Activated T-helper 2 cell treated with anti-CD3 and anti-CD28 coated beads, Interferon-gamma antibody, Interleukin-2, Interleukin-4, amounts not matched to agents 10 μg/mL and 5 μg/mL and 100 μg/mL, durations not matched to agents 14 hours and 24 hours and 36 hours (primary cell): ENCODE measurements at regions of chr11 and their contacts with region 1.

Region 1: DNA sequence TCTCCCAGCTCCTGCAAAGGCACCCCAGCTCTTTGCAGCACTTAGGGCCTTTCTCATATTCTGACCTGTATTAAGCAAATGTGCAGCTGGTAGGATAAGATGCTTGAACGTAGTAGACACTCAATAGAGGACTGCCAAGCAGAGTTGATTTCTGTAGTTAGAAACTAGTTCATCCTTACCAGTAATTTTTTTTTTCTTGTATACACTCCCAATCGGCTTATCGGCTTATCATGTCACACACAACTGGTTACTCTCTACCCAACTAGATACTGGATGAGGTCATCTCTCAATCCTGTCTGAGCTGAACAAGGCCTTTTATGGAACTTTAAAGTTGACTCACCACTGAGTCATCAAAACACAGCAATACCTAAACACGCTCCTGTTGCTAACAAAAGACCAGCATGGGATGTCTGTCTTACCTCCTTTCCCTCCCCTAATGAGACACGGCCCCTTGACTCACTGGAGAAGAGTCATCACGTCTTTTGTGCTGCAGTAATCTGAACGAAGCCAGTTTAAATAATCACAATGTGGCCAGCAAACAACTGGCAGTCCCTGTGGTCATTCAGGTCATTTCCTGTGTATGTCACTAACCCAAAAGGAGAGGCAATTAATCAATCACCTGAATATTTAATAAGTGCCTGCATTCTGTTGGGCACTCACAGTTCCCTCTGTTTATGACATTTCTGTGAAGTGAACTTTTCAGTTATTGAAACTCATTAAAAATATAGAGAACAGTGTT is 7.5 kb upstream of the WEE1 start:
- DNase-seq: peak; percentile 61
- H3K4me3 Mint-ChIP-seq: peak overlapping the region; percentile 37
- H3K27ac Mint-ChIP-seq: peak overlapping the region; percentile 89
- H3K4me1 Mint-ChIP-seq: peaks cover 26% of the 10 kb centered on the region
- H3K27me3 Mint-ChIP-seq: peaks cover 2% of the 10 kb centered on the region

Region 2: GRCh38 chr11:9534791-9535781 is 30.9 kb before region 1 on chr11:
- intact Hi-C with region 1: loop called (anchors 2 kb)
- DNase-seq: peak; percentile 57
- H3K4me3 Mint-ChIP-seq: no peak overlapping the region
- H3K27ac Mint-ChIP-seq: no peak overlapping the region
- H3K4me1 Mint-ChIP-seq: no peaks in the 10 kb centered on the region
- H3K27me3 Mint-ChIP-seq: no peaks in the 10 kb centered on the region

Region 3: GRCh38 chr11:9601037-9601875 is 35.3 kb after region 1 on chr11:
- intact Hi-C with region 1: loop called (anchors 1 kb)
- DNase-seq: peak; percentile 72
- H3K4me3 Mint-ChIP-seq: peak overlapping the region; percentile 77
- H3K27ac Mint-ChIP-seq: peak overlapping the region; percentile 89
- H3K4me1 Mint-ChIP-seq: peaks cover 34% of the 10 kb centered on the region
- H3K27me3 Mint-ChIP-seq: no peaks in the 10 kb centered on the region